Activated T-helper 1 cell treated with anti-CD3 and anti-CD28 coated beads, Interleukin-12 subunit alpha, Interleukin-12 subunit beta, Interleukin-2, Interleukin-4 antibody, amounts not matched to agents 30 ng/mL and 10 ng/mL and 1 ng/mL, durations not matched to agents 14 hours and 24 hours and 36 hours (primary cell): ENCODE measurements at regions of chr16 and their contacts with region 1.

Region 1: DNA sequence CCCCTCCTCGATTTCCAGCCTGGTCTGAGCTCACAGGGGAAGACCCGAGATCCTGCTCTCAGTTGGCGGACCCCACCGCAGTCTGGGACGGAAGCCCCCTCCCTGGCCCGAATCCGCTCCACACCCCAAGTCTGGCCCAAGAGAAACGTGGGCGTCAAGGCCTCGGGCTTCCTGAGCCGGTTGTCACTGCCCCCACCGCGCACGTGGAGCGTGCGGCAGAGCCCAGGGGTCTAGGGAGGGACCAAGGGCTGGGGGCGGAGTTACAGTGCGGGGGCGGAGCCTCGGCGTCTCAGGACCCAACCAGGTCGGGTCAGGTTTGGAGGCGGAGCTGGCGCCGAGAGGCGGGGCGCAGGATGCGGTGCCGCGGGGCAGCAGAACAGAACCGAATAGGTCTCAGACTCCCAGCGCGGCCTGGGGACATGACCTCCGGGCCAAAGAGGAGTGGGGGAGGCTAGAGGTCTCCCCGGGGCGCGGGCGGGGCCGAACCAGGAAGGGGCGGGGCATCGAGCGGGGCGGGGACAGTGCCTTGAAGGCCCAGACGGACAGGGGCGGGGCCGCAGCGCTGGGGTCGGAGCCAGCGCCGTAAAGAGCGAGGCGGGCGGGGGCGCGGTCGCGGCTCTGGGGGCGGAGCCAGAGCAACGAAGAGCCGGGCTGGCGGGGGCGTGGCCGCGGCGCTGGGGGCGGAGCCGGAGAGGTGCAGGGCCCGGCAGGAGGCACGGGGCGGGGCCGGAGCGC is 431 bp upstream of the ZFPM1 start:
- DNase-seq: peak; percentile 97
- H3K4me3 Mint-ChIP-seq: peak overlapping the region; percentile 79
- H3K27ac Mint-ChIP-seq: peak overlapping the region; percentile 62
- H3K4me1 Mint-ChIP-seq: peaks cover 27% of the 10 kb centered on the region
- H3K27me3 Mint-ChIP-seq: peaks cover 13% of the 10 kb centered on the region

Region 2: DNA sequence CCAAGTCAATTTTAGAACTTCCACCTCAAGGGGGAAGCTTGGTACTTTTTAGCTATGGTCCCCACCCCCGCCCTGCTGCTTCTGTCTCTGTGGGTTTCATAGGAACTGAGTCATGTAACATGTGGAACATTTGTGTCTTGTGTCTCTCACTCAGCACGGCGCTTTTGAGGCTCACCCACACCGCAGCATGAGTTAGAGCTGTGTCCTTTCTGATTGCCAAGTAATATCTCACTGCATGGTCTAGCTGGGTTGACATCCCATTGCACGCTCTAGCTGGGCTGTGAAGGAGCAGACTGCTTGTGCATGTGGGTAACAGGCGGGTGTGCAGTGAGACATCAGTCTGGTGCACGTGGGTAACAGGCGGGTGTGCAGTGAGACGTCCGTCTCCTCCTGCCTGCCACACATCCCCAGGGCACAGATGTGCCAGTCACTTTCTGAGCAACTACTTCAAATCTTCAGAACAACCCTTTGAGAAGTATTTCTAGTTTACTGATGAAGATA is 557.0 kb before region 1 on chr16:
- intact Hi-C with region 1: loop called (anchors 5 kb)
- DNase-seq: peak; percentile 83
- H3K4me3 Mint-ChIP-seq: peak overlapping the region; percentile 76
- H3K27ac Mint-ChIP-seq: peak overlapping the region; percentile 100
- H3K4me1 Mint-ChIP-seq: peaks cover 56% of the 10 kb centered on the region
- H3K27me3 Mint-ChIP-seq: no peaks in the 10 kb centered on the region

Region 3: GRCh38 chr16:88405216-88406060 is 47.2 kb before region 1 on chr16:
- intact Hi-C with region 1: no loop called
- DNase-seq: no peak
- H3K4me3 Mint-ChIP-seq: no peak overlapping the region
- H3K27ac Mint-ChIP-seq: no peak overlapping the region
- H3K4me1 Mint-ChIP-seq: peaks cover 6% of the 10 kb centered on the region
- H3K27me3 Mint-ChIP-seq: no peaks in the 10 kb centered on the region

Region 4: GRCh38 chr16:88468275-88469141 is 15.9 kb after region 1 on chr16:
- intact Hi-C with region 1: loop called (anchors 2 kb)
- DNase-seq: no peak
- H3K4me3 Mint-ChIP-seq: no peak overlapping the region
- H3K27ac Mint-ChIP-seq: no peak overlapping the region
- H3K4me1 Mint-ChIP-seq: peaks cover 20% of the 10 kb centered on the region
- H3K27me3 Mint-ChIP-seq: no peaks in the 10 kb centered on the region

Region 5: DNA sequence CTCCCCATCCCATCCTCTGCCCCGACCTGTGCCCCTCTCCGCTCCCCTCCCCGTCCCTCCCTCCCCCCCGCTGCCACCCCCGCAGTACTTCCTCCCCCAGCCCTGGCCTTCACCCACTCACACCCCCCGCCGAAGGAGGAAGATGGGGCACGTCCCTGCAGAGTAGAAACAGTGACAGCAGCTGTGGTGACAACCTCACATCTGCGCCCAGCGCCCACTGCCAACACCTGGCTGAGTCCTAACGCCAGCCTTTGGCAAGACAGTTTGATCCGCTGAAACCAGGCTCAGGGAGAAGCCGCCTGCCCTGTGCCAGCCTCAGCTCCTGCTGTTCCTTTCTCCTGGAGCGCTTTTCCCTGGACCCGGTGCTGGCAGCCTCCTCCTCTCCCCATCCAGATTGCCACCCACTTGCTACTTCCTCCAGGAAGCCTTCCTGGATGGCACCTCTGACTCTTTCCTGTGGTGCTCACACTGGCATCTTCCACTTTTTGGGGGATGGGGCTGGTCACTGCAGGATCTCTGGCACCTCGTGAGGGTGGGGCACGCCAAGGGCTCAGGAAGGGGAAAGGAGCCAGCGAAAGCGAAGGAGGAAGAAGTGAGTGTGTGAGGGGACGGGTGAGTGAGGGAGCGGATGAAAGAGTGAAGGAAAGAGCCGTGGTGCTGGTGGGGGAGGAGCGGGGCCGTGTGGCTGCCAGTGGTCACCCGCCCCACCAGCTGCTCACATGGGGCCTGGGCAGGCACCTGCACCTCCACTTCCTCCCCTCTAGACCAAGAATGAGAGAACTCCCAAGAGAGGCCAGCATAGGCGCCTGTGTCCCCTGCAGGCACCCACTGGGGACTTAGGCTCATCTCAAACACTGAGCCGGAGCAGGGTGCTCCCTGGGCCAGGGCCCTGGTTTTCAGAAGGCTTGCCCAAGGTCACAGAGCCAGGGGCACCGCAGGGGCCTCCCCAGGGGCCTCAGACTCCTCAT is 27.4 kb after region 1 on chr16:
- intact Hi-C with region 1: no loop called
- DNase-seq: no peak
- H3K4me3 Mint-ChIP-seq: no peak overlapping the region
- H3K27ac Mint-ChIP-seq: no peak overlapping the region
- H3K4me1 Mint-ChIP-seq: peaks cover 18% of the 10 kb centered on the region
- H3K27me3 Mint-ChIP-seq: peaks cover 6% of the 10 kb centered on the region

Region 6: DNA sequence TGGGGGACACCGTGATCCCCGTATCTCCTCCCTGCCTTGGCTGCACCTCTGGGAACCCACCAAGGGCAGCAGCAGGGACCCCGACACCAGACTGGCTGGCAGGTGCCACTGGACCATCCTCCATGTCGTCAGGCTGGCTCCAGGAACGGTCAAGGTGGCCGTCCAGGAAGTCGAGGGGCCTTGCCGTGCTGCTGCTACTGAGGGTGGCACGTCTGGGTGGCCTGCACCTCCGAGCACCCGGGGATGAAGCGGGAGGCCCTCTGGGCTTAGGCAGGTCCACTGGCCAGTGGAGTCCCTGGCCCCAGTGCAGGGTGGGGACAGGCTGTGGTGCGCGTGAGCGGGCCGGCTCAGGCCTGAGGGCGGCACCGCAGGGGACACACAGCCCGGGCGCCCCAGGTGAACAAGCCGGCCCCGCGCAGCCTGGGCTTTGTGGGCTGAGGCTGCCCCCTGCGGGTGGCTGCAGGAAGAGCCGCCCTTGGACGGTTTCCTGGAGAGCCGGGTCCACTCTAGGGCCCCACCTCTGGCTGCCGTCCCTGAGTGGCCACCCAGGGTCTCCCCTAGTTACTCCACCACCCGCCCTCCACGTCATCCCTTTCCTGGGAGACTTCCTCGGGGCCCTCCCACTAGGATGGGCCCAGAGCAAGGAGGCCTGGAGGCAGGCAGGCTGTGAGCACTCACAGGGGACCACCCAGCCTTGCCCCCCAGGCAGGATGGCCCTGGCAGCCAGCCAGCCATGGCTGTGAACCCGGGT is 74.7 kb after region 1 on chr16:
- intact Hi-C with region 1: no loop called
- DNase-seq: peak; percentile 37
- H3K4me3 Mint-ChIP-seq: no peak overlapping the region
- H3K27ac Mint-ChIP-seq: no peak overlapping the region
- H3K4me1 Mint-ChIP-seq: no peaks in the 10 kb centered on the region
- H3K27me3 Mint-ChIP-seq: no peaks in the 10 kb centered on the region

Region 7: DNA sequence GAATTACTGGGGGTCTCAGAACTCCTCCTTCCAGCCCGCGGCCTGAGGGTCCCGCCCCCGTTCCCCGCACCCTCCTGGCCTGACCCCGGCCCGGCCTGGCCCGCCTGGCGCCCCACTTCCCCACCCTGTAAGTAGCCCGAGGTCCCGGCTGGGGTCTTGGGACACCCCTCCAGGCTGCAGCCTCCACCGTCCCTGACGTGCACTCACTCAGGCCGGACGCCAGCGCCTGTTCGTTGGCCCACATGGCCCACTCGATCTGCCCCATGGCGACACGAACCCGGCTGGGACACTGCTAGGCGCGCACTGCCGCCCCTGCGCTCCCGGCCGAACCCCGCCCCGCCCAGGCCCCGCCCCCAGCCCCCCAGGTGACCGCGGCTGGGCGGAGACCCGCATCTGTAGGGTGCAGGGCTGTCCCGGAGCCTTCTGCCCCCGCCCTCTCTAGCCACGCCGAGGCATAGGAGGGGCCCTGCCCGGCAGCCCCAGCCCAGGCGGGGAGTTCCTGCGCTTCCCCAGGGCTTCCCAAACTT is 198.2 kb after region 1 on chr16 and contains the start of gene CYBA:
- intact Hi-C with region 1: loop called (anchors 1 kb)
- DNase-seq: peak; percentile 88
- H3K4me3 Mint-ChIP-seq: peak within 1 kb of the TSS; percentile 88
- H3K27ac Mint-ChIP-seq: peak within 1 kb of the TSS; percentile 96
- H3K4me1 Mint-ChIP-seq: peaks cover 13% of the 10 kb centered on the region
- H3K27me3 Mint-ChIP-seq: no peaks in the 10 kb centered on the region
- total RNA-seq, gene CYBA: 218 and 219 TPM in 2 replicates

Region 8: GRCh38 chr16:88803264-88803987 is 350.8 kb after region 1 on chr16 and contains the start of gene CDT1:
- intact Hi-C with region 1: loop called (anchors 5 kb)
- DNase-seq: peak; percentile 84
- H3K4me3 Mint-ChIP-seq: peak within 1 kb of the TSS; percentile 85
- H3K27ac Mint-ChIP-seq: peak within 1 kb of the TSS; percentile 84
- H3K4me1 Mint-ChIP-seq: peaks cover 15% of the 10 kb centered on the region
- H3K27me3 Mint-ChIP-seq: no peaks in the 10 kb centered on the region
- total RNA-seq, gene CDT1: 95.4 and 97.3 TPM in 2 replicates